Breast epithelium (tissue), 4 donors: ENCODE measurements at regions of chr10 and their contacts with region 1.

Region 1: DNA sequence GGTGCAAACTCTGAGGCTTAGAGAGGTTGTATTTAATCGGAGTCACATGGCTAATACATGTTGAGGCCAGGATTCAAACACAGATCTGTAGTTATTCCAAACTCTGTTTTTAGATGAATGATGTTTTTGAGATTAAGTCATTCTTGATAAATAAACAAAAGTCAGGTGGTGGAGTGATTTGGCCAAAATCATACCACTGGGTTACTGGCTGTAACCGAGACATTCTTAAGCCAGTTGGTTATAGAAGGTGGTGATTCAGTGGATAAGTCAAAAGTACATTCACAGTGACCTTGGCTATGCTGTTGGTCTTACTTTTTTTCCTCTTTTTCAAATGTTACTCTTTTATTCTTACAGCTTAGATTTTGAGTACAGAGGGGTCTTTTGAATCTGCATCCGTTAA is 361.4 kb downstream of the KIF20B start:
- DNase-seq: no peak
- H3K4me3 ChIP-seq: no peak overlapping the region
- H3K27ac ChIP-seq: no peak overlapping the region
- H3K4me1 ChIP-seq: no peaks in the 10 kb centered on the region
- H3K27me3 ChIP-seq: no peaks in the 10 kb centered on the region
- CTCF ChIP-seq: no peak
- POLR2A ChIP-seq: no peak

Region 2: DNA sequence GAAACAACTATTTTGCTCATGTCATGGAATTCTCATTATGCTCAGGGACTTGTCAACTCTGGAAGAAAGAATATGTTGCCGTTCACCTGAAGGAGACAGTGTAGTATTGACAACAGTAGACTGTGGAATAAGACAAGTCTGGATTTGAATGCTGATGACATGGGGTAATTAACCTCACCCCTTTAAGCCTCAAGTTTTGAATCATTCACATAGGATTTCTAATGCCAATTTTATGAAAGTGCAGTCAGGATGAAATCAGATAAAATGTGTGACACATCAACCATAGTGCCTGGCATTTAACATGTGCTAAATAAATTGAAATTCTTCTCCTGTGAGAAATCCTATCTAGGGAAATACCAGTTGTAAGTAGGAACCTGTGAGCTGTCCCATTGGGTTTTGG is 55.6 kb before region 1 on chr10:
- intact Hi-C with region 1: loop called (anchors 2 kb)
- DNase-seq: no peak
- H3K4me3 ChIP-seq: no peak overlapping the region
- H3K27ac ChIP-seq: no peak overlapping the region
- H3K4me1 ChIP-seq: no peaks in the 10 kb centered on the region
- H3K27me3 ChIP-seq: no peaks in the 10 kb centered on the region
- CTCF ChIP-seq: no peak
- POLR2A ChIP-seq: no peak